Posterior vena cava (tissue), 2 donors: ENCODE measurements at regions of chr16 and their contacts with region 1.

Region 1: GRCh38 chr16:2919511-2920255 is 8.0 kb downstream of the FLYWCH1 start:
- DNase-seq: no peak

Region 2: GRCh38 chr16:1530883-1531642 is 1388.6 kb before region 1 on chr16:
- intact Hi-C with region 1: no loop called
- DNase-seq: peak; percentile 92

Region 3: GRCh38 chr16:2960183-2961032 is 40.7 kb after region 1 on chr16:
- intact Hi-C with region 1: loop called in 1 of 2 experiments (anchors 1 kb)
- DNase-seq: no peak